Activated T-helper 1 cell treated with anti-CD3 and anti-CD28 coated beads, Interleukin-12 subunit alpha, Interleukin-12 subunit beta, Interleukin-2, Interleukin-4 antibody, amounts not matched to agents 30 ng/mL and 10 ng/mL and 1 ng/mL, durations not matched to agents 14 hours and 24 hours and 36 hours (primary cell): ENCODE measurements at regions of chr9 and their contacts with region 1.

Region 1: GRCh38 chr9:129835021-129835871 is at the starts of genes C9orf78 and USP20:
- DNase-seq: peak; percentile 98
- H3K4me3 Mint-ChIP-seq: peak within 1 kb of the TSS; percentile 97
- H3K27ac Mint-ChIP-seq: peak within 1 kb of the TSS; percentile 99
- H3K4me1 Mint-ChIP-seq: peaks cover 50% of the 10 kb centered on the region
- H3K27me3 Mint-ChIP-seq: no peaks in the 10 kb centered on the region
- total RNA-seq, gene C9orf78: 64.0 and 67.4 TPM in 2 replicates
- total RNA-seq, gene USP20: 47.9 and 50.2 TPM in 2 replicates

Region 2: DNA sequence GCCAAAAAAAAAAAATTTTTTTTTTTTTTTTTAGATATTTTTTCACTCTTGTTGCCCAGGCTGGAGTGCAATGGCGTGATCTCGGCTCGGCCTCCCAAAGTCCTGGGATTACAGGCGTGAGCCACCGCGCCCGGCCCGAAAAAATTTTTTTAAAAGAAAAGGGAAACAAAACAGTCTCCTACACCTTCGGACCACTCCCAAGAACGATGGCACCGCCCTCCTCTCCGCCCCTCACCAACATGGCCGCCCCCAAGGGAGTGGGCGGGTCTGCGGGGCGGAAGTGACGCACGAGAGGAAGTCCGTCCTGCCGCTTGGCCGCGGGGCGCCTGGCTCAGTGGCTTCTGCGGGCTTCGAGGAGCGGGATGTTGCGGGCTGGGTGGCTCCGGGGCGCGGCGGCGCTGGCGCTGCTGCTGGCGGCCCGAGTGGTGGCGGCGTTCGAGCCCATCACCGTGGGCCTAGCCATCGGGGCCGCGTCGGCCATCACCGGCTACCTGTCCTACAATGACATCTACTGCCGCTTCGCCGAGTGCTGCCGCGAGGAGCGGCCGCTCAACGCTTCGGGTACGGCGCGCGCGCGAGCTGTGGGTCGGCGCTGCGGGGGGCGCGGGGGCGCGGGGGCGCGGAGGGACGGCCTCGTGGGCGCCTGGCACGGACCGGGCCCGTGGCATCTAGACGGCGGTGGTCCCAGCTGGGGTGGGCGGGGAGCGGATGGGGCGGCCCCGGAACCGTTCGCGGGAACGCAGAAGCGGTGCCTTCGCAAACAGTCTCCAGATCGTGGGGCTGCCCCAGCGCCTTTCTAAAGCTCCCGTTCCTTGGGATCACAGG is 32.2 kb before region 1 on chr9 and contains the start of gene TOR1B:
- intact Hi-C with region 1: loop called (anchors 1 kb)
- DNase-seq: peak; percentile 94
- H3K4me3 Mint-ChIP-seq: peak within 1 kb of the TSS; percentile 90
- H3K27ac Mint-ChIP-seq: peak within 1 kb of the TSS; percentile 90
- H3K4me1 Mint-ChIP-seq: peaks cover 31% of the 10 kb centered on the region
- H3K27me3 Mint-ChIP-seq: no peaks in the 10 kb centered on the region
- total RNA-seq, gene TOR1B: 21.9 and 25.6 TPM in 2 replicates

Region 3: DNA sequence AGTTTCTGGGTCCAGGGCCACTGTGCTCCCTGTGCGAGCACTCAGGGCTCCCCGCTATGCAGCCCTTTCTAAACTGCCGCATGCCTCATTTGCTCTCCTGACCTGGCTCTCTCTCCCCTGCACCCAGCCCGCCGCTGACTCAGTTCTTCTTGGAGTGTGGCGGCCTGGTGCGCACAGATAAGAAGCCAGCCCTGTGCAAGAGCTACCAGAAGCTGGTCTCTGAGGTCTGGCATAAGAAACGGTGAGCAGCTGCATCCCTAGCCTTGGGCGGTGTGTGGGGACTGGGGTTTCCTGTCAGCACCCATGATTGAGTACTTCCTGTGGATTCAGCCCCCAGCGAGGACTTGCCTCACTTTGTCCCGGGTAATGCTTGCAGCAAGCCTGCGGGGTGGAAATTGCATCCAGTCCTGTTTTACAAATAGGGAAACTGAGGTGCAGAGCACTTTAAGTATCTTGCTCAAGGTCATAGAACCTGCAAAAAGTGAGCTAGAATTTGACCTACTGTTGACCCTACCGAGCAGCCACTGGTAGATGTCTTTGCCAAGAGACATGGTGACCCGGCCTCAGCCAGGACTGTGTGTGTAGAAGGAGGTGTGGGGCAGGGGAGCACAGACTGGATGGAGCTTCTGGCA is 27.9 kb after region 1 on chr9:
- intact Hi-C with region 1: loop called (anchors 1 kb)
- DNase-seq: peak; percentile 77
- H3K4me3 Mint-ChIP-seq: peak overlapping the region; percentile 72
- H3K27ac Mint-ChIP-seq: peak overlapping the region; percentile 93
- H3K4me1 Mint-ChIP-seq: peaks cover 65% of the 10 kb centered on the region
- H3K27me3 Mint-ChIP-seq: no peaks in the 10 kb centered on the region

Region 4: DNA sequence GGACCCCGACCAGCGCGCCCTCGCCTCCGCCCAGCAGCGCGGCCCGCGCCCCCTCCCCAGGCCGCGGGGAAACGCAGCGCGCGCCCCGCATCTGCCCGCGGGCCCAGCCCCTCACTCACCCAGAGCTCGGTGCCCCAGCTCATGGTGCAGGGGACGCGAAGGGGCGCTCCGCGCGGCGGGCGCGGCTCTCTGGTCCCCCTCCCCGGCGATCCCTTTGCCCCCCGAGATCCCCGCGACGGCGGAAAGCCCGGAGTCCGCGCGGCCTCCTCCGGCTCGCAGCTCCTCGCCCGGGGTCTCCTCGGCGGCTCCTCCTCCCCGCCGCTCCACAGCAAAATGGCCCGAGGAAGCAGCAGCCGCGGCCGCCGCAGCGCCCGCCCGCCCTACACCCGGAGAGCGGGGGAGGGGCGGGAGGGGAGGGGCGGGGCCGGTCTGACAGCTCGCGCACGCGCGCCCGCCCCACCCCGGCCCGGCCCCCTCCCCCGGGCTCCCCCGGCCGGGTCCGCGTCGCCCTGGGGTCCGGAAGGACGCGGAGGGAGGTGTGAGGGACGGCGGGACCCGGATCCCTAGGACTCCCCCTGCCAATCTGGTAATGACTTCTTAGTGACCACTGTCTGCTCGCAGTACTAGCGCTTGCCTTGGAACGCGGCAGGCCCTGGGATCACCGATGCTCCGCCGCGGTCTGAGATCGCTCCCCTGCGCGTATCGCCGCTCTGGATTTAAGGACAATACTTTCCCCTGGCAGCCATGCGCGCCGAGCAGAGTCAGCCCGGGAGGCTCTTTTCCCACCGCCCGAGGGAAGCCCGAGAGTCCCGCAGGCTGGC is 207.8 kb after region 1 on chr9 and contains the start of gene FNBP1:
- intact Hi-C with region 1: loop called (anchors 5 kb)
- DNase-seq: peak; percentile 78
- H3K4me3 Mint-ChIP-seq: peak within 1 kb of the TSS; percentile 97
- H3K27ac Mint-ChIP-seq: peak within 1 kb of the TSS; percentile 99
- H3K4me1 Mint-ChIP-seq: peaks cover 55% of the 10 kb centered on the region
- H3K27me3 Mint-ChIP-seq: no peaks in the 10 kb centered on the region
- total RNA-seq, gene FNBP1: 195 and 202 TPM in 2 replicates

Region 5: DNA sequence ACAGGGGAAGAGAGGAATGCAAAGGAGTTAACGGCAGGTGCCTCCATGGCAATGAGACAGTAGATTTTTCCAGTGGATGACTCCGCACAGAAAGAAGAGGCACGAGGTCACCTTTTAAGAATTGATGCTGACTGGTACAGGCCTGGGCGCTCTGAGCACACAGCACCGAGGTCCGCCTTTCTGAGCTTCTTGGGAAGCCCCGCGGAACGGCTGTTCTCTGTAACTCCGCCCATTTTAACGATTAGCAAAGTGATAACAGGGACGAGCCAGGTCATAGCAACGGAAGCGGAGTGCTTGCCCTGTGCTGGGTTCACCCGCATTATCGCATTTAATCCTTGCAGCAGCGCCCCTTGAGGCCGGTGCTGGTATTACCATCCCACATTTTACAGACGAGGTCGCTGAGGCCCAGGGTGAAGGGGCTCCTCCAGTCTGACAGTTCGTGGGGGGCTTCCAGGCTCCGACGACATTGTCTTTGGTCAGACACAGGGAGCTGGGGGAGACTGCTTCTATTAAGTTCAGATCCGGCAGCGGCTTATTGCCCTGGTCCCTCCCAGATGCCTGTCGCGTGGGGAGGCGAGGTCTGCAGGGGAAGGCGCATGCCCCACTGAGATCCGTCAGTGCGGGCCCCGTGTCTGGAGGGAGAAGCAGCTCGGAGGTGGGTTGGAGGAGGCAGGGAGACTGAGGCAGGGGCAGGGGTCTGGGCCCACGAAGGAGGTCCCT is 407.9 kb after region 1 on chr9:
- intact Hi-C with region 1: loop called (anchors 5 kb)
- DNase-seq: peak; percentile 61
- H3K4me3 Mint-ChIP-seq: no peak overlapping the region
- H3K27ac Mint-ChIP-seq: no peak overlapping the region
- H3K4me1 Mint-ChIP-seq: peaks cover 25% of the 10 kb centered on the region
- H3K27me3 Mint-ChIP-seq: peaks cover 2% of the 10 kb centered on the region